ENCODE measurements at regions of chr15 and their contacts with region 1.

Region 1: GRCh38 chr15:31391687-31392671 is 65.3 kb downstream of the KLF13 start:
- DNase-seq: peak; percentile 67 to 94
- H3K4me3 ChIP-seq: peak overlapping the region; percentile 68 to 88
- H3K27ac ChIP-seq: peak overlapping the region; percentile 96 to 97
- H3K4me1 ChIP-seq: peaks cover 2 to 20% of the 10 kb centered on the region in 2 donors
- H3K27me3 ChIP-seq: no peaks in the 10 kb centered on the region
- CTCF ChIP-seq: no peak

Region 2: DNA sequence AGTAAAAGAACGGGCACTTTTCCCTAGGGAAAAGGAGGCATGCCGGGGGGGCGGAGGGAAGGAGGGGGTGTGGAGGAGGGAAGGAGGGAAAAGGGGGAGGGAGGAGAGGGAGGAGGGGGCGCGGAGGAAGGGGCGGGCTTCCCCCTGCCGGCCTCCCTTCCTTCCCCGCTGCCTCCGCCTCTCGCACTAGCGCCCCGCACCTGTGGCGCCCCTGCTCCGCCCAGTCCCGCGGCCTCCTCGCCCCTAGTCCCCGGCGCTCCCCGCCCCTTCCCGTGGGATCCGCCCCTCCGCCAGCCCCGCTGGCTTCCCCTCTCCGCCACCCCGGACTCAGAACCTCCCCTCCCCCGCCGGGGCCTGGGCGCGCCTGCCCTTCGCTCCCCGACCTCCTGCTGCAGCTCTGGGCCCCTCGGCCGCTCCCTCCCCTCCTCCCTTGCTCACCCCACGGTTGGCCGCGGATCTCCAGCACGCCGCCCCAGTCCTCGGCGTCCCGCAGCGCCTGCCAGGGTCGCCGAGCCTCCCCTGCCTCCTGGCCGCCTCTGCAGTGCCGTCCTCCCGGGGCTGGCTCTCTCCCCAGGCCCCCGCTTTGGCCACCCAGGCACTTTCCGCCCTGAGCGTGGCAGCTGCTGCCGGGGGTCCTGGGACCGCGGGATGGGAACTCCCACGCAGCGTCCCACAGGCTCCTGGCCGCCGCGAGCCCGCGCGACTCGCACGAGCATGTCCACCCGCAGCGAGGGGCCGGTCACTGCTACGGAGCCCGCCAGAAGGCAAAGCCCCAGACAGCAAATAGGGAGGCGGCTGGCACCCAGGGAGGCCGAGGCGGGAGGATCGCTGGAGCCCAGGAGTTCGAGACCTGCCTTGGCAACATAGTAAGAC is 1717.1 kb before region 1 on chr15:
- intact Hi-C with region 1: loop called (anchors 10 kb)
- DNase-seq: peak in 1 of 2 donors; percentile 69
- H3K4me3 ChIP-seq: peak overlapping the region; percentile 57 to 90
- H3K27ac ChIP-seq: no peak overlapping the region
- H3K4me1 ChIP-seq: peaks cover 0 to 3% of the 10 kb centered on the region in 2 donors
- H3K27me3 ChIP-seq: no peaks in the 10 kb centered on the region
- CTCF ChIP-seq: no peak

Region 3: DNA sequence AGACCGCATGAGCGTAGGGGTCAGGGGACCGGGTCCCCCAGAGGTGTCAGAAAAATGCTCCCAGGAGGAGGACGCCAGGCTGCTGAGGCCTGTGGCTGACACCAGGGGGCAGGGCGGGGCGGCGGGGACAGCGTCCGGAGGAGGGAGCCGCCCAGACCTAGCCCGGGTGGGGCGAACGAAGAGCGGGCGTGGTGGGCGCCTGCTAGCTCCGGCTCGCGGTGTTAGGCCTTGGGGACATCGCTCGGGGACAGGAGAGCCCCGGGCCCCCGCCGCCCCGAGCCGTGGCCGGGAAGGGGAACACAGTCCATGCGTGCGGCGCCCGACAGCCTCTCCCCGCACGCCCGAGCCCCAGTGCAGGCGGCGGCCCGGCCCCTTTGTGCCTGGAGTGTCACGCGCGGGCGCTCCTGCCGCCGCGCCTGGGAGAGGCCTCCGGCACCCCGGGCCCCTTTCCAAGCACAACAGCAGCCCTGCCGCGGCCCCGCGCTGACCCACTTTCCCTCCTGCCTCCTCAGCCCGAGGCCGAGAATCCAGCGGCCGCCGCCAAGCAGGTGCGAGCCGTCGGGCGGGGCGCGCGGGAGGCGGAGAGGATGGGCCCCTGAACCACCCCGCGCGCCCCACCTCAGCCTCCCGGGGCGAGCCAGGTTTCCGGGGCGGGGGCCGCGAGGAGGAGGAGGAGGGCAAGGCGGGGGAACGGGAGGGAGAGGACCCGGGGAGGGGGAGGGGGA is 176.3 kb before region 1 on chr15:
- intact Hi-C with region 1: loop called (anchors 2 kb)
- DNase-seq: peak; percentile 25 to 86
- H3K4me3 ChIP-seq: peak overlapping the region; percentile 63 to 76
- H3K27ac ChIP-seq: peak overlapping the region; percentile 87 to 91
- H3K4me1 ChIP-seq: peaks cover 10 to 14% of the 10 kb centered on the region in 2 donors
- H3K27me3 ChIP-seq: no peaks in the 10 kb centered on the region
- CTCF ChIP-seq: peak; percentile 83 to 90 (median 88)

Region 4: GRCh38 chr15:31236184-31237042 is 155.6 kb before region 1 on chr15:
- intact Hi-C with region 1: loop called (anchors 5 kb)
- DNase-seq: peak; percentile 46 to 92
- H3K4me3 ChIP-seq: peak overlapping the region in 1 of 2 donors; percentile 56
- H3K27ac ChIP-seq: peak overlapping the region; percentile 56 to 81
- H3K4me1 ChIP-seq: peaks cover 0 to 13% of the 10 kb centered on the region in 2 donors
- H3K27me3 ChIP-seq: no peaks in the 10 kb centered on the region
- CTCF ChIP-seq: no peak

Region 5: DNA sequence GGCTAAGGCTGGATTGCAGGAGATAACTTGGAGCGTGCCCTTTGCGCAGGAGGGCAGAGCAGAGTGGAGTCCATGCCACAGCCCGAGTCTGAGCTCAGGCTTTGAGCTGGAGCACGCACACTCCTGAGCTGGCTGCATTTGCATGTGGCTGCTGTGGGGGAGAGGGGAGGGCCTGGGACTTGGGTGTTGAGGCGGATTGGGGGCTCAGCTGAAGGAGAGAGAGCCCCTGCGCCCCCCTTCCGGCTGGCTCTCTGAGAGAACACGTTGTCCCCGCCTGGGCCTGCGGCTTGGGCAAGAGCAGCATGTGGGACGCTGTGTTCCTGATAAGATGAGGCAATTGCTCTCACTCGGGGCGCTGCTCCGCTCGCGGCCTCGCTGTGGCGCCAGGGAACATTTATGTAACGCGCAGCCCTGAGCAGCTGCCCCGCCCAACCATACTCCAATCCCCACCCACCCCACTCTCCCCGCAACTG is 26.3 kb before region 1 on chr15:
- intact Hi-C with region 1: loop called (anchors 2 kb)
- DNase-seq: peak; percentile 88 to 98
- H3K4me3 ChIP-seq: peak overlapping the region; percentile 18 to 58
- H3K27ac ChIP-seq: peak overlapping the region; percentile 74 to 79
- H3K4me1 ChIP-seq: peaks cover 15 to 38% of the 10 kb centered on the region in 2 donors
- H3K27me3 ChIP-seq: no peaks in the 10 kb centered on the region
- CTCF ChIP-seq: peak; percentile 20 to 63 (median 52)

Region 6: GRCh38 chr15:31442203-31443111 is 50.5 kb after region 1 on chr15:
- intact Hi-C with region 1: no loop called
- DNase-seq: no peak
- H3K4me3 ChIP-seq: no peak overlapping the region
- H3K27ac ChIP-seq: peak overlapping the region; percentile 49 to 70
- H3K4me1 ChIP-seq: peaks cover 7 to 24% of the 10 kb centered on the region in 2 donors
- H3K27me3 ChIP-seq: no peaks in the 10 kb centered on the region
- CTCF ChIP-seq: peak in 2 of 3 experiments; percentile 5 to 10

Measured in ascending aorta (tissue), 2 donors.